Calu3 (cell line): ENCODE measurements at regions of chr2 and their contacts with region 1.

Region 1: DNA sequence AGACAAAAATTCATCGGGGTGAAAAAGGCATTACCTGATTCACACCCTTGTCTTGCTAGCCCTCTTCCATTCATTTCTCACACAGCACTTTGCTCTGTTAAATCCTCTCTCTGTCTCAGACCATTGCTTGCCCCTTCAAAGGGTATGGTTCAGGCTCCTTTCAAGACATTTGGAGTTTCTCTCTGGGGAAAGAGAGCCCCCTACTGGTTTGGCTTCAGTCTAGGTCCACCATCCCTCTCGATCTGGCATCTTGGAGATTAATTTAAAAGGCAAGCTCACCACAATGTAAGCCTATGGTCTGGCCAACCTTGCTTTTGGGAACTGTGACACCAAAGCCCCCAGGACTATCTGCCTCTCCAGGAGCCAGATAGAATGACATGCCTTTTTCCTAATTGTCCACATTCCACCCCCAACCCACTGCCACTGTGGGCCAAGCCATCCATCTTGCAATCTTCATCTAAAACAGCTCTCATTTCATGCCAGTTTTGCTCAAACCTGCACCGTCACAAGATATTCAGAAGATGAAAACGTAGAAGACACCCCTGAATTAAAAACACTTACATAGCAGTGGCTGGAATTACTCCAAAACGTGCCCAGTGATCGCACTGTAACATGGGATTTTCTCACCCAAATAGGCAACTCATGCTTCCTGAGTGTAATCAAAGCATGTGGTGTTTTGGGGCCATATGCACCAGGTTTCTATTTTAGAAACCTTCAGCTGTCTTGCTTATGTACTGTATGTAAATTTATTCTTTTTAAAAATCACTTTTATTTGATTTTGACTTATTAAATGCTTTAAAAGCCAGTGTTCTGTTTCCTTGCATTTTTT is 93.9 kb downstream of the FARSB start:
- DNase-seq: peak; percentile 72
- H3K4me3 Mint-ChIP-seq: no peak overlapping the region
- H3K27ac Mint-ChIP-seq: peak overlapping the region; percentile 66
- H3K4me1 Mint-ChIP-seq: no peaks in the 10 kb centered on the region
- H3K27me3 Mint-ChIP-seq: no peaks in the 10 kb centered on the region
- CTCF ChIP-seq: peak; percentile 64

Region 2: DNA sequence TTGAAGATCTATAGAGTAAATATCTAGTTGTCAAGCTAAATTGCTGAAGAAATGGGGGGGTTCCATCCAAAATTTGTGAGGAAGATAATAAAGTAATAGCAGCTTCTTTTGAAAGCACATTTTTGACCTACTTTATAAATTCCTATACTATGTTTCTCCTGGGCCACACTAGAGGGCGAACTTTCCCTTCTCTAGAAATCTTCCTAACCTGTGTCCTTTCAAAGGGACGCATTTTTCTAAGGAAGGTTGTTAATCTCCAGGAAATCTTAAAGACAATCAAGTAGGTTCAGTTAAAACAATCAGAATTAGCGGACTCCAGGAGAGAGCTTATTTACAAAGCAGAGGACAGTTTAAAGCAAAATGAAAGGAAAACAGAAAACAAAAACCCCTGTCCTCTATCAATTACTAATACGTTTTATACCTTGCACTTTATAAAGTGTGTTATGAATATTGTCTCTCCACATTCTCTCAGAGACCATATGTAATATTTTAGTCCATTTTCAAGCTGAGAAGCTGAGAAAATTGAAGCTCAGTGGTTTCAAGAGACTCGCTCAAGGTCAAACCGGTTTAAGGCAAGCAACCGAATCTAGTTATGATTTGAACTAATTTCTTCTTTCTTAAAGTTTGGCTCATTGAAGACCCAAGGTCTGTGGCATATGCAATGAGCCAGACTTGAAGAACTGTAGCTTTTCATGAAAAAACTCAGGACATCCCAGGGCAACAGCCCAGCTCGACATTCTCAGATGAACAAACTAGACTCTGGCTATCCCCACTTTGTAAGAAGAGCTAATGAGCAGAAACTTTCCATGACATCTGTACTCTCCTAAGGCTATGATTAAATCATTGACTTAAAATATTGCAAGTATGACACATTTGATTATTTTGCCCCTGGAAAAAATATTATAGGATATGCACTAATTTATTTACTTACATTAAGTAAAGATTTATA is 536.8 kb before region 1 on chr2:
- CTCF ChIA-PET with region 1: interaction called, 3 read pairs
- intact Hi-C with region 1: loop called (anchors 5 kb)
- DNase-seq: peak; percentile 36
- H3K4me3 Mint-ChIP-seq: no peak overlapping the region
- H3K27ac Mint-ChIP-seq: no peak overlapping the region
- H3K4me1 Mint-ChIP-seq: no peaks in the 10 kb centered on the region
- H3K27me3 Mint-ChIP-seq: no peaks in the 10 kb centered on the region
- CTCF ChIP-seq: no peak

Region 3: DNA sequence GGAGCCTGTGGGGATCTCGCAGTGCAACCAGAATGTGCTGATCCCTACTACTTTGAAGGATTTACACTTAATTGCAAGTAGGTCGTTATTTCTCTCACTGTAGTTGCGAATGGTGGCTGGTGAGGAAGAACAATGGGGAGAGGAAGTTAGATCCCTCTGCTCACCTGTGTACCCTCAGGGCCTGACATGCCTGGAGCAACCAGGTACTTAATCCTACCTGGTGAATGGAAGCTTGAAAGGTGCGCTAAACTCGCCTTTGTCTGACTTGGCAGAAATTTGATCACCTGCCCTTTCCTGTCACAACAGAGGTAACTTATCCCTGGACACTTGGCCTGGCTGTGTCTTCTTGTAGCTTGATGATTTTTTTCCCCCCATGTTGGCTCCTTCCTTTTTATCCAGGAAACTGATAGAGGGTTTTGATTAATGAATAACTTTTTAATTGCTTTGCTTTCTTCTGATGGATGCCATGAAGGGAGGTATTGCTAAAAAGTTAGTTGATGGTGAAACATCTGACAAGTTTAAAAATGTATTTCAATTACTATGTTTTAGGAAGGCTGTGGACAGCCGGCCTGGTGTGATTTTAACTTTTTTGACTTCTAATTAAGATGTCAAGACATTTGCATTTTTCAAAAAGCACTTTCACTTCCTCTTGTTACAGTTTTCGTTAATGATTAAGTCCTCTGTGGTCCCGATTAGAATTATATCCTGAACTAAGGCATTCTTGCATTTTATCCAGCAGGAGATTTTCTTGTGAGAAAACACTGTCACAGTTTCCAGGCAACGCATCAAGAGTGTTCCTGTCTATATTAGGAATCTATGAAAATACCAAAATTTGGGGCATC is 128.5 kb before region 1 on chr2:
- CTCF ChIA-PET with region 1: no interaction called
- intact Hi-C with region 1: loop called (anchors 5 kb)
- DNase-seq: peak; percentile 53
- H3K4me3 Mint-ChIP-seq: peak overlapping the region; percentile 57
- H3K27ac Mint-ChIP-seq: peak overlapping the region; percentile 94
- H3K4me1 Mint-ChIP-seq: peaks cover 58% of the 10 kb centered on the region
- H3K27me3 Mint-ChIP-seq: no peaks in the 10 kb centered on the region
- CTCF ChIP-seq: no peak

Region 4: GRCh38 chr2:222878877-222879603 is 317.0 kb after region 1 on chr2:
- CTCF ChIA-PET with region 1: no interaction called
- intact Hi-C with region 1: no loop called
- DNase-seq: peak; percentile 28
- H3K4me3 Mint-ChIP-seq: peak overlapping the region; percentile 9
- H3K27ac Mint-ChIP-seq: peak overlapping the region; percentile 7
- H3K4me1 Mint-ChIP-seq: peaks cover 42% of the 10 kb centered on the region
- H3K27me3 Mint-ChIP-seq: no peaks in the 10 kb centered on the region
- CTCF ChIP-seq: no peak